A673 (cell line): ENCODE measurements at regions of chr7 and their contacts with region 1.

Region 1: GRCh38 chr7:73446682-73447081 is 13.1 kb downstream of the FZD9 start:
- DNase-seq: no peak
- H3K4me3 ChIP-seq: no peak overlapping the region
- H3K27ac ChIP-seq: no peak overlapping the region
- H3K4me1 ChIP-seq: no peaks in the 10 kb centered on the region
- H3K27me3 ChIP-seq: no peaks in the 10 kb centered on the region
- CTCF ChIP-seq: no peak

Region 2: DNA sequence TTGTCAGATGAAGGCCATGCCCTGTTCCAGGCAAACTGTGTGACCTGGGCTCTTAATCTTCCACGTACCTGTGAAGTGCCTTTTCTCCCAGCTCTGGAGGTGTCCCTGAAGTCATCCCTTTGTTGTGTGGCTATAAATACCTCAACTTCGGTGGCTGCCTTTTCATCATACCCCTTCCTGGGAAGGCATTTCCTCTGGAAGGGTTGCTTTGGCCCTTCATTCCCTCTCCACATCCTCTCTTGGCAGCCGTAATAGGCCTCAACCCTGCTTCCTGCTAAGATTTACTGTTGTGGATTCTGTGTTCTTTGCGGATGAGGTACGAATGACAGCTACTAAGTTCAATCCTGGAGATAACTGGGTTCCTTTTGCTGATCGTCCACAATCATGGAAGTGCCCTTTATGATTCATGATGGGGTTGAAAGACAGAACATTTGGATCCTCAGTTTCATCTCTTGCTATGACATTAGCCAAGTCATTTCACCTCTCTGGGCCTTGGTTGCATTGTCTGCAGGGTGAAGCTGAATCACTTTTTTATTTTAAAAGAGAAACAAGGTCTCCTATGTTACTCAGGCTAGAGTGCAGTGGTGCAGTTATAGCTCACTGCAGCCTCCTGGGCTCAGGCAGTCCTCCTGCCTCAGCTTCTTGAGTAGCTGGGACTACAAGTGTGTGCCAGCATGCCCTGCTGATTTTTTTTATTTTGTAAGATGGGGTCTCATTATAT is 95.1 kb before region 1 on chr7:
- CTCF ChIA-PET with region 1: no interaction called
- POLR2A ChIA-PET with region 1: no interaction called
- intact Hi-C with region 1: no loop called
- DNase-seq: no peak
- H3K4me3 ChIP-seq: no peak overlapping the region
- H3K27ac ChIP-seq: no peak overlapping the region
- H3K4me1 ChIP-seq: no peaks in the 10 kb centered on the region
- H3K27me3 ChIP-seq: no peaks in the 10 kb centered on the region
- CTCF ChIP-seq: no peak

Region 3: GRCh38 chr7:73482746-73483145 is 36.1 kb after region 1 on chr7:
- CTCF ChIA-PET with region 1: no interaction called
- POLR2A ChIA-PET with region 1: no interaction called
- intact Hi-C with region 1: loop called (anchors 5 kb)
- DNase-seq: peak; percentile 30
- H3K4me3 ChIP-seq: no peak overlapping the region
- H3K27ac ChIP-seq: peak overlapping the region; percentile 35
- H3K4me1 ChIP-seq: peaks cover 6% of the 10 kb centered on the region
- H3K27me3 ChIP-seq: no peaks in the 10 kb centered on the region
- CTCF ChIP-seq: no peak

Region 4: GRCh38 chr7:73894733-73895551 is 448.3 kb after region 1 on chr7:
- CTCF ChIA-PET with region 1: no interaction called
- POLR2A ChIA-PET with region 1: no interaction called
- intact Hi-C with region 1: no loop called
- DNase-seq: no peak
- H3K4me3 ChIP-seq: no peak overlapping the region
- H3K27ac ChIP-seq: no peak overlapping the region
- H3K4me1 ChIP-seq: no peaks in the 10 kb centered on the region
- H3K27me3 ChIP-seq: no peaks in the 10 kb centered on the region
- CTCF ChIP-seq: no peak